Heart left ventricle (tissue), 16 donors: ENCODE measurements at regions of chr11 and their contacts with region 1.

Region 1: DNA sequence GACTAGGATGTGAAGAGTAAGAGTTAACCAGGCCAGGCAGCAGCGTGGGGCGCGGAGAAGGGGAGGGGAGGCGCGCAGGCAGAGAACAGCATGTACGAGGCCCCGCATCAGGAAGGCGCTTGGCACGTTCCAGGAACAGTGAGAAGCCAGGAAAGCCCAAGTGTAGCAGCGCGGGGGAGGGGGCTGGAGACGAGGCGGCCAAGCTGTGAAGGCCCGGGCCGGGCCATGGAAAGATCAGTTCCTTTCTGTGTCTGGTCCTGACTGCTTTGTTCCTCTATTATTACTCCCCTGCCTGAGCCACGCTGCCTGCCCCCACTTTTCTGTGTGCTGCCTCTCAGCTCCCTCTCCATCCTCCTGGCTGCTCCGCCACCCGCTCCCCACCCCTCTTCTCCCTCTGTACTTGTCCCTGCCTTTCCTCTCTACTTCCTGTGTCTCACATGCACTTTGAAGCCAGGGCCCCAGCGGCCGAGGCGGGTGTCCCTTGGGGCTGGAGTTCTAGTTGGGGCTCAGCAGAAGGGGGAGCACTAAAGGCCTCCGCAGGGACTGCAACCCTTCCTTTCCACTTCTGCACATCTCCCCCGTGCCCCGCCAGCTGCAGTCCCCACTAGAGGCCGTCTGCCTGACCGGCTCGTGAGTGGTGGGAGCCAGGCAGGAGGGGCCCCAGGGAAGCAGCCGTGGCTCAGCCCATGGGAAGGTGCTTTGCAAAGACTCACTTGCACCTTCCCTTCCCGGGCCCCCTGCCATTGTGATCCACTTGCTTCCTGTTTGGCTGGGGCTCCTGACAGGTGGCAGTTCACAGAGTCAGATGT is 63.7 kb downstream of the PRDM11 start:
- DNase-seq: peak; percentile 79 to 96 (median 91)
- ATAC-seq: peak; percentile 94 to 97 (median 96)
- H3K4me3 ChIP-seq: peak overlapping the region in 8 of 12 donors; percentile 5 to 40 (median 19)
- H3K27ac ChIP-seq: peak overlapping the region; percentile 64 to 94 (median 82)
- H3K4me1 ChIP-seq: peaks cover 14 to 75% (median 28%) of the 10 kb centered on the region in 12 donors
- H3K27me3 ChIP-seq: no peaks in the 10 kb centered on the region
- CTCF ChIP-seq: peak in 3 of 12 donors; percentile 8 to 27 (median 21)
- POLR2A ChIP-seq: peak in 1 of 2 donors; percentile 35

Region 2: GRCh38 chr11:45017329-45017728 is 192.8 kb before region 1 on chr11:
- intact Hi-C with region 1: no loop called
- DNase-seq: no peak
- ATAC-seq: no peak
- H3K4me3 ChIP-seq: no peak overlapping the region
- H3K27ac ChIP-seq: no peak overlapping the region
- H3K4me1 ChIP-seq: peaks cover 4 to 28% (median 17%) of the 10 kb centered on the region in 12 donors
- H3K27me3 ChIP-seq: no peaks in the 10 kb centered on the region
- CTCF ChIP-seq: no peak
- POLR2A ChIP-seq: no peak

Region 3: DNA sequence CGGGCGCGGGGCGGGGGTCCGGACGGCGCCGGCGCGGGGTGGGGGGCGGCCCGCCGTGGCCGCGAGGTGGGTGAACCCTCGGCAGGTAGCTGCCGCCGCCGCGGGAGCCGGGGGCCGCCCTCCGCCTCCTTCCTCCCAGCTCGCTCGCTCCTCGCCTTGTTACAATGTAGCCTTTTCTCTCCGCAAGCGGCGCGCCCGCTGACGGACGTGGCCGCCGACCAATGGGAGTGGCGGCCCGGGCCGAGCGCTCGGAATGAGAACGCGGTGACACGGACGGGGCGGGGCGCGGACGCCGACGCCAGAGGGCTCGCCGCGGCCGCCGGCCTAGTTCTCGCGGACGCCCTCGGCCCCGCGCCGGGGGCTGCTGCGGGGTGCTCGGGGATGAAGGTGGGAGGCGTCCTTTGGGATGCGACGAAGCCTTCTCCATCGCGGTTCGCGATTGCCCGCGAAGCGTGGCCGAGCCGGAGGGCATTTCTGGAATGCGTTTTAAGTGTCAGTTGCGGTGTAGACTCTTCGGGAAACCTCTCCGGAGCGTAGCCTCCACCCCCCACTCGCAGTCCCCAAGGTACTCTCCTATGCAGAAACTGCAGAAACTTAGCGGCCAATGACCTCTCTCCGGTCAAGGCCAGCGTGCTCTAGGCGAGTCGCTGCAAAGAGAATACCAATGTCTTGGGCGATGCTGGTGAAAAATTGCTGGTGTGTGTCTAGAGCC is 62.9 kb before region 1 on chr11:
- intact Hi-C with region 1: loop called in 4 of 10 experiments (anchors 1 to 2 kb)
- DNase-seq: peak; percentile 95 to 98 (median 97)
- ATAC-seq: peak; percentile 91 to 98 (median 98)
- H3K4me3 ChIP-seq: peak overlapping the region; percentile 58 to 93 (median 78)
- H3K27ac ChIP-seq: peak overlapping the region; percentile 77 to 99 (median 98)
- H3K4me1 ChIP-seq: peaks cover 0 to 31% (median 20%) of the 10 kb centered on the region in 12 donors
- H3K27me3 ChIP-seq: peaks cover 0 to 6% (median 0%) of the 10 kb centered on the region in 9 donors
- CTCF ChIP-seq: peak in 4 of 12 donors; percentile 17 to 38 (median 24)
- POLR2A ChIP-seq: peak; percentile 65 to 95

Region 4: GRCh38 chr11:45158198-45158731 is 51.8 kb before region 1 on chr11:
- intact Hi-C with region 1: no loop called
- DNase-seq: peak in 4 of 5 donors; percentile 40 to 73 (median 62)
- ATAC-seq: peak; percentile 63 to 80 (median 67)
- H3K4me3 ChIP-seq: no peak overlapping the region
- H3K27ac ChIP-seq: peak overlapping the region; percentile 27 to 86 (median 72)
- H3K4me1 ChIP-seq: peaks cover 0 to 94% (median 53%) of the 10 kb centered on the region in 12 donors
- H3K27me3 ChIP-seq: no peaks in the 10 kb centered on the region
- CTCF ChIP-seq: no peak
- POLR2A ChIP-seq: no peak

Region 5: DNA sequence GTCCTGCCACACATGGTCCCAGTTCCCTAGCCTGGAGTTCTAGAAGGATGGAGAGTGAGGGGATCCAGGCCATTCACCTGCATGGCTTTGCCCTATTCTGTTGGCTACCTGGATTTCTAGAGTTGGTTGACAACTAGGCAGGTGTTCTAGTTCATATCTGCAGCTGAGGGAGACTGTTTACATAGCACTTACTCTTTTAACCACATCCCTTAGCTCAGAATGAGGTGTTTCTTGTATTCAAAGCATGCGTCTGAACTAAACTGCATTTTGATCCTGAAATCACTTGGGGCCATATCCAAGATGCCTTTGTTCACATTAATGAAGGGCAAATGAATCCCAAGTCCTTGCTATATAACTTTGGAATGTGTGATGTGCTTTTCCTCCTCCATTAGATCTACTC is 15.2 kb after region 1 on chr11:
- intact Hi-C with region 1: no loop called
- DNase-seq: no peak
- ATAC-seq: no peak
- H3K4me3 ChIP-seq: no peak overlapping the region
- H3K27ac ChIP-seq: no peak overlapping the region
- H3K4me1 ChIP-seq: no peaks in the 10 kb centered on the region
- H3K27me3 ChIP-seq: no peaks in the 10 kb centered on the region
- CTCF ChIP-seq: no peak
- POLR2A ChIP-seq: no peak

Region 6: GRCh38 chr11:45278714-45279113 is 68.6 kb after region 1 on chr11:
- intact Hi-C with region 1: no loop called
- DNase-seq: no peak
- ATAC-seq: no peak
- H3K4me3 ChIP-seq: no peak overlapping the region
- H3K27ac ChIP-seq: no peak overlapping the region
- H3K4me1 ChIP-seq: no peaks in the 10 kb centered on the region
- H3K27me3 ChIP-seq: peaks cover 0 to 23% (median 7%) of the 10 kb centered on the region in 9 donors
- CTCF ChIP-seq: no peak
- POLR2A ChIP-seq: no peak

Region 7: DNA sequence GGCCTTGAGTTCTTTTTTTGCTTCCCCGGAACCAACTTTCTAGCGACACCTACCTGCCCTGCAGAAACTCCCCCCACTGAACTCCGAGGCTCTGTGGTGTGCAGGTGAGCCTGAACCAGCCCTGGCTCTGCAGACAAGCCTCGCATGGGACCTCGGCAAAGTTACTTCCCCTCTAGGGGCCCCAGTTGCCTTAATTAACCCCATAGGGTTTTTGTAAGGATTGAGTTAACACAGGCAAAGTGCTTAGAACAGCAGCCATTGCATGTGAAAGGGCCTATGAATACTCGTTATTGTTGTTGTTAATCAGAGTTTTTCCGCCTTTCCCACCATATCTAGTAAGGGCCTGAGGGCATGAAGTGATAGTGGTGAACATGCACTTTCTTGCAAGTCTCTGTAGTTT is 88.6 kb after region 1 on chr11:
- intact Hi-C with region 1: loop called in 2 of 10 experiments (anchors 5 kb)
- DNase-seq: no peak
- ATAC-seq: no peak
- H3K4me3 ChIP-seq: no peak overlapping the region
- H3K27ac ChIP-seq: no peak overlapping the region
- H3K4me1 ChIP-seq: no peaks in the 10 kb centered on the region
- H3K27me3 ChIP-seq: peaks cover 0 to 5% (median 0%) of the 10 kb centered on the region in 9 donors
- CTCF ChIP-seq: no peak
- POLR2A ChIP-seq: no peak